Heart left ventricle (tissue), 16 donors: ENCODE measurements at regions of chr17 and their contacts with region 1.

Region 1: DNA sequence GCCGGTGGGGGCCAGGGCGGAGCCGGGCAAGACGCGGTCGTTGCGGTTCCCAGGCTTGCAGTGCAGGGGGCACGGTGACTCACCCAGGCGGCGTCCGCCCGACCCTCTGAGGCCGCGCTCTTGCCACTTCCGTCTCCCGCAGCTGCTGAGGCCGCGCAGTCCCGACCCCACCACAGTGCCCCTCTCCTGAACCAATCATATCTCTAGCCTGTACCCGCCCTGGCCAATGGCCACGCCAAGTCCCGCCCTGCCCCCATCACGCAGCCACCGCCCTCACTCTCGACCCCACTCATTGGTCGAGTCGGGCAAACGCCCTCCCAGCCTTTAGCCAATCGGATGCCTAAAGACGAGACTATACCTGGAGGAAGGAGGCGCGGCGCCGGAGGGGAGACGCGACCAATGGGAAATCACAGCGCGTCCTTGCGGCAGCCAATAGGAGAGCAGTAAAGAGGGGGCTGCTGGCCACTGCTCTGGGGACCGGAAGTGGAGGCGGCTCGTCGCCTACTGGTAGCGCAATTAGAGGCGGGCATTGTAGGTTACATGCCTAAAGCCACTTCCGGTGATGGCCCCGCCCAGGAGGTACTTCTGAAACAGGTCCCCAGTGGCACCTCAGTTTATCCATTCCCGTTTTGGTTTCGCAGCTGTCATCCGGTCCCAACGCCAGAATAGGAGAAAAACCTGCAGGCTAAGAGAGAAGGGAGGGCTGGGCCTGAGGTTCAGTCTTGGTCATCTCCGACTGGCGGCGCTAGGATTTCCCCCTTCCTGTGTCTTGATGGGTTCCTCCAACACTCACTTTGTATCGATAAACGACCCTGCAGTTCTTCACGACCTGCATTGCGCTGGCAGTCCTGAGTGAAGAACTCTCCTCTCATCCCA is 3.5 kb upstream of the MTMR4 start:
- DNase-seq: peak; percentile 100
- ATAC-seq: peak; percentile 89 to 94 (median 93)
- H3K4me3 ChIP-seq: peak overlapping the region; percentile 66 to 97 (median 76)
- H3K27ac ChIP-seq: peak overlapping the region; percentile 92 to 99 (median 97)
- H3K4me1 ChIP-seq: peaks cover 5 to 66% (median 42%) of the 10 kb centered on the region in 12 donors
- H3K27me3 ChIP-seq: no peaks in the 10 kb centered on the region
- CTCF ChIP-seq: no peak
- POLR2A ChIP-seq: peak in 1 of 2 donors; percentile 52

Region 2: DNA sequence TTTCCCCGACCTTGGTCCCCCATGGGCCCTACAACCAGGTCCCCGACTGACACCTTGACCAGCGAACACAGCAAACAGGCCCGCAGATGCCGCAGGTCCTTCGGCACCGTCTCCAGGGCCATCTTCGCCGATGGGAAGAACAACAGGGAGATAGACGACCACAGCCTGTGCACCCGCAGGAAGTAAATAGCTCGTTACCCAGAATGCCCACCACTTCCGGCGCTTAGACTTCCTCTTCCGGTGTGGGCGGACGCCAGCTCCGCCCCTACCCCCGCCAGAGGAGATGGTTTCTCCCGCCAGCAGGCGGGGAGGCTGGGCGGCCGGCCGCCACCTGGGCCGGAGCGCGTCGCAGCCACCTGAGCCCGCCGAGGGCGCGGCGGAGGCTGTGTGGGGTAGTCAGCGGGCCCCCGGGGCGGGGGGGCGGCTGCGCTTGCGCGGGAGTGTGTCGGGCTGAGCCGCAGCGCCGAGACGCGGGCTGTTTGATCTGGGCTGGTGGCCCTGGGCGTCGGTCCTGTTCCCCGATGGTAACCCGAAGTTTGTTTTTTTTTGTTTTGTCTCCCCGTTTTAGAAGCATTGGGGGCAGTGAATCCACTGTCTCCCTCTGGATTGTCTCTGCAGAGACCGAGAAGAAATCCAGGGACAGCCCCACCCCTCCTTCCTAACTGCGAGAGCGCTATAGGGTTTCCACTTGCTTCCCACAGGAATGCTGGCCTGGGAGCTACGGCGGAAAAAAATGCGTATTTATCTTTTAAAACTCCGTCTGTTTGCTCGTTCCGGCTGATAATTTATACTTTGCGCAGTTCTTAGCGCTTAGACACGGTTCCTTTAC is 165.7 kb before region 1 on chr17 and contains the start of gene SUPT4H1:
- intact Hi-C with region 1: loop called in 1 of 10 experiments (anchors 5 kb)
- DNase-seq: peak; percentile 88 to 93 (median 90)
- ATAC-seq: peak; percentile 96 to 98 (median 97)
- H3K4me3 ChIP-seq: peak within 1 kb of the TSS; percentile 70 to 98 (median 88)
- H3K27ac ChIP-seq: peak within 1 kb of the TSS; percentile 84 to 98 (median 94)
- H3K4me1 ChIP-seq: peaks cover 0 to 49% (median 17%) of the 10 kb centered on the region in 12 donors
- H3K27me3 ChIP-seq: no peaks in the 10 kb centered on the region
- CTCF ChIP-seq: peak in 2 of 12 donors; percentile 16 to 21
- POLR2A ChIP-seq: peak in 1 of 2 donors; percentile 91
- total RNA-seq, gene SUPT4H1: 44.1 to 69.9 (median 58.0) TPM

Region 3: DNA sequence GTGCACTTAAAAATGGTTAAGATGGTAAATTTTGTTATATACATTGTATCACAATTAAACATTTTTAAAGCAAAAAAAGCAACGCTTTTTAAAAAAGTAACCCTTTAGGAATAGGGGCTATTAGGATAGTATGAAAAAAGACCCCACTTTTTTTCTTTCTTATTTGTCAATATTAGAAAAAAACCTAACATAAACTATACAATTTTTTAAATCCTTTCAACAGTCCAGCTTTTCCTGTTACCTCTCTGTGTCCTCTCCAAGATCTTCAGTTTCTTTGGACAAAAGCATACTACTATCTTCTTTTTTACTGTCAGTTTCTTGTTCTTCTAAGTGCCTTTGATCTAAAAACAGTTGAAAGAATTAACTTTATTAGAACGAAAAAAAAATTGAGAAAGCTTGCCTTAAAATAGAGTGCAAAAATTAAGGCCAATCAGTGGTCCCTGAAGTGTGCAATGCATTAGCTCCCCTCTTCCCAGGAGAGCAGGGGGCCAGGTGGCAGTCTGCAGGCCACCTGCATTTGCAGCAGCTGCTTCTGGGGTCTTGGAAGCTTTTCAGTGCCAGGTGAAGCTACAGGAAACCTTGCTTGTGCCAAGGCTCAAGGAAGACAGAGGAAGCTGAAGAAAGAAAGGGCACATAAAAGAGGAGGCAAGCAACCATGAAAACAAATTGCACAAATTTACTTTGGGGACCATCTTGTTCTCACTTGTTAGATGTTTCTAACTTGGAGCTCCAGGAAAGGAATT is 46.8 kb after region 1 on chr17:
- intact Hi-C with region 1: no loop called
- DNase-seq: no peak
- ATAC-seq: no peak
- H3K4me3 ChIP-seq: no peak overlapping the region
- H3K27ac ChIP-seq: peak overlapping the region in 1 of 12 donors; percentile 12
- H3K4me1 ChIP-seq: peaks cover 0 to 26% (median 0%) of the 10 kb centered on the region in 12 donors
- H3K27me3 ChIP-seq: no peaks in the 10 kb centered on the region
- CTCF ChIP-seq: no peak
- POLR2A ChIP-seq: no peak

Region 4: DNA sequence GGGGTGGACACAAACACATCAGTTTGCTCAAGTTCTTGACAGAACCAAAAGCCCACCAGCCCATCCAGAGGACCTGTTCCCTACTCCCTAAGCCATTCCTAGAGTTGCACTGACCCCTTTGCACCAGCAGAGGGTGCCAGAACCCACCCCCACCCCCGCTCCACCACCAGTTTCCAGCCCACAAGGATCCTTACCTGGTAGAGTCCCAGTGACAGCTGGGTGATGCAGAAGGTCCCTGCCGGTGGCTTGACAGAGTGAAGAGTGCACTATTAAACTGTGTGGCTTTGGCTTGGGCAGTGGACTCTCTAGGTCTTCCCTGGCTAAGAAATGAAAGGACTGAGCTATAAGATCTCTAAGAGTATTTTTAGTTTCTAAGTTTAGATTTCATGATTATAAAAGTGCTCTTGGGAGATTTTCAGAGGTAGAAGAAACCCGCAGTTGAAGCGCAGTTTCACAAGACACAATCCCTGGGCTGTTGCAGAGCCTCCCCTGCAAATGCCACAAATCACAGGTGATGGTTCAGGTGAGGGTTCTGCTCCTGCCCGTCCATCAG is 69.8 kb after region 1 on chr17:
- intact Hi-C with region 1: loop called in 5 of 10 experiments (anchors 2 to 10 kb)
- DNase-seq: peak; percentile 39 to 61 (median 42)
- ATAC-seq: peak in 3 of 4 donors; percentile 72 to 83 (median 78)
- H3K4me3 ChIP-seq: no peak overlapping the region
- H3K27ac ChIP-seq: no peak overlapping the region
- H3K4me1 ChIP-seq: no peaks in the 10 kb centered on the region
- H3K27me3 ChIP-seq: no peaks in the 10 kb centered on the region
- CTCF ChIP-seq: peak; percentile 86 to 95 (median 91)
- POLR2A ChIP-seq: no peak

Region 5: DNA sequence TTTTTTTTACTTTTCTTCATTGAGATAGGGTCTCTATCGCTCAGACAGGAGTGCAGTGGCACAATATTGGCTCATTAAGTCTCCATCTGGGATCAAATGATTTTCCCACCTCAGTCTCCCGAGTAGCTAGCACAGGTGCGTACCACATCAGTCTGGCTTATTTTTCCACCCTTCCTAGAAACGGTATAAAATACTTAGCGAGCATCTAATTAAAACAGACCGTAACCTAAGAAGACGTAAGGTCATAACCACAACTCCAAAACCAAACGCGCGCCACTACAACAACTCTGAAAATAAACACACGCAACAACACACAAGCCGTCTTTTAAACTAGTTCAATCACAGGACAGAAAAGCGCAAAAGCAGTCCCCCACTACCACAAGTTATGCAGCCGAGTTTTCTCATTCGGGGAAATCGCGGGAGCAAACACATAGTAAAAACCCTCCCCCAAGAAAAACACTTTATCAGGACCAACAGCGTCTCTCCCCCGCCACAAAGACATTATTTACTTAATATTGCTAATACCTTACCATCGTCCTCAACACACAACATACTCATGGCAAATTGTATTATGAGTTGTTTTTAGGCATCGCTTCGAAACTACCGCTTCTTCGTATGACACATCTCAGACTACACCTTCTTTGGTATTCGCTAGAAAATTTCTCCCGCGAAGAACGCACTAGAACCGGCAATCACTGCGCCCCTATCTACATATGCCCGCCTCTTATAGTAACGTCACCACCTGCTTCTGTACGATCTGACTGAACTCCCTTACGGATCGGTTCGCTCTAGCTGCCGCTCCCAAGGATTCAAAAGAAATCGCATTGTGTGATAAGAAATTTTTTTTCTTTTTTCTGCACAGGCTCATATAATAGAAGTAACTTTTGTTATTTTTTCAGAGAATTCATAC is 141.1 kb after region 1 on chr17:
- intact Hi-C with region 1: loop called in 1 of 10 experiments (anchors 1 kb)
- DNase-seq: peak in 4 of 5 donors; percentile 76 to 84 (median 78)
- ATAC-seq: peak; percentile 95 to 98 (median 97)
- H3K4me3 ChIP-seq: peak overlapping the region in 11 of 12 donors; percentile 34 to 74 (median 48)
- H3K27ac ChIP-seq: peak overlapping the region; percentile 58 to 90 (median 80)
- H3K4me1 ChIP-seq: peaks cover 0 to 12% (median 0%) of the 10 kb centered on the region in 12 donors
- H3K27me3 ChIP-seq: no peaks in the 10 kb centered on the region
- CTCF ChIP-seq: peak in 1 of 12 donors; percentile 15
- POLR2A ChIP-seq: peak; percentile 93 to 98

Region 6: GRCh38 chr17:58703137-58703972 is 185.4 kb after region 1 on chr17:
- intact Hi-C with region 1: loop called in 3 of 10 experiments (anchors 10 kb)
- DNase-seq: no peak
- ATAC-seq: no peak
- H3K4me3 ChIP-seq: no peak overlapping the region
- H3K27ac ChIP-seq: no peak overlapping the region
- H3K4me1 ChIP-seq: no peaks in the 10 kb centered on the region
- H3K27me3 ChIP-seq: no peaks in the 10 kb centered on the region
- CTCF ChIP-seq: no peak
- POLR2A ChIP-seq: no peak

Region 7: DNA sequence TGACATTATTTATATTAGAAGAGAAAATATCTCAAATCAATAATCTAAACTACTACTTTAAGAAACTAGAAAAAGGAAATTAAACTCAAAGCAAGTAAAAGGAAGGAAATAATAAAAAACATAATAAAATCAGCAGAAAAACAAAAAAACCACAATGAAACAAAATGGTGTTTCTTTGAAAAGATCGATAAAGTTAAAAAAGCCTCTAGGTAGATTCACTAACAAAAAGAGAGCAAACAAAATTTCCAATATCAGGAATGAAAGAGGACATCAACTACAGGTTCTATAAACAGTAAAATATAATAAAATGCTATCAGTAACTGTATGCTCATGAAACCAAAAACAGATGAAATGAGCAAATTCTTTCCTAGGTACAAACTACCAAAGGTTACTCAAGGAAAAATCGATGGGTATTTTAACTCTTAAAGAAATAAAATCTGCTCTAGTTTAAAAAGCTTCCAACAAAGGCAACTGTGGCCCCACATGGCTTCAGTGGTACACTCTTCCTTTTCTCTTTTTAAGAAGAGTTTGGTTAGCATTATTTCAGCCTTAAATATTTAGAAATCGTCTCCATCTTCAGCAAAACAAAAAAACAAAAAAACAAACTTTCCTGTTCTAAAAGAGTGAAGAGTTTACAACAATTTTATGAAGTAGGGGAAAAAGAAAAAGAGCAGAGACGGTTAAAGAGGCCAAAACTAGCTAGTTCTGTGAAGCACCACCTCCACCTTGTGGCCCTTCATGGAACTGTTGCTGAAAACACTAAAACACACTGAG is 486.6 kb after region 1 on chr17:
- intact Hi-C with region 1: loop called (anchors 1 to 5 kb)
- DNase-seq: peak in 4 of 5 donors; percentile 39 to 48 (median 46)
- ATAC-seq: peak in 3 of 4 donors; percentile 70 to 76 (median 72)
- H3K4me3 ChIP-seq: no peak overlapping the region
- H3K27ac ChIP-seq: peak overlapping the region in 1 of 12 donors; percentile 6
- H3K4me1 ChIP-seq: peaks cover 0 to 31% (median 5%) of the 10 kb centered on the region in 12 donors
- H3K27me3 ChIP-seq: no peaks in the 10 kb centered on the region
- CTCF ChIP-seq: peak; percentile 90 to 98 (median 96)
- POLR2A ChIP-seq: no peak

Region 8: GRCh38 chr17:59155439-59156182 is 637.6 kb after region 1 on chr17 and contains the start of gene PRR11:
- intact Hi-C with region 1: loop called in 1 of 10 experiments (anchors 5 kb)
- DNase-seq: peak; percentile 92 to 97 (median 95)
- ATAC-seq: peak; percentile 94 to 97 (median 96)
- H3K4me3 ChIP-seq: peak within 1 kb of the TSS; percentile 52 to 91 (median 74)
- H3K27ac ChIP-seq: peak within 1 kb of the TSS; percentile 35 to 89 (median 84)
- H3K4me1 ChIP-seq: peaks cover 0 to 37% (median 15%) of the 10 kb centered on the region in 12 donors
- H3K27me3 ChIP-seq: no peaks in the 10 kb centered on the region
- CTCF ChIP-seq: no peak
- POLR2A ChIP-seq: peak in 1 of 2 donors; percentile 7
- total RNA-seq, gene PRR11: 0.51 to 11.4 (median 1.1) TPM